Pancreas (tissue), 10 donors: ENCODE measurements at regions of chr3 and their contacts with region 1.

Region 1: GRCh38 chr3:73100741-73101559 is 39.5 kb downstream of the EBLN2 start:
- DNase-seq: peak; percentile 62 to 86 (median 76)
- ATAC-seq: peak; percentile 82 to 99 (median 96)
- H3K4me3 ChIP-seq: no peak overlapping the region
- H3K27ac ChIP-seq: no peak overlapping the region
- H3K4me1 ChIP-seq: peaks cover 0 to 4% (median 0%) of the 10 kb centered on the region in 3 donors
- H3K27me3 ChIP-seq: no peaks in the 10 kb centered on the region
- CTCF ChIP-seq: peak; percentile 76 to 93 (median 87)

Region 2: DNA sequence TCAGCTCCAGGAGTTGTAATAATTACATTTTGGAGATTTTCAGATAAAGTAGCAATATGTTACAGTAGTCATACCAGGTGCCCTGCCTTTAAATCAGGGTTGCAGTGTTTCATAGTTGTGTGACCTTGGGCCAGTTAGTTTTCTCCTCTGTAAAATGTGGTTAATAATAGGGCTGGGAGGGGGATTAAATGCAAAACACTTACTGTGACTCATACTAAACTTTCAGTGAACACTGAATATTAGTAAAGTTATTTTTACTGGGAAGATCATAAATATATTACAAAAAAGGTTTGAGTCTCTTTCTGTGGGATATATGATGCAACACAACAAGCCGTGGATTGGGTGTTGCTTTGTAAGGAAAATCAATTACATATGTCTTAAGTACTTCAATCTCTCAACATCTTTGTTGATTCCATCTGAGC is 40.6 kb before region 1 on chr3:
- intact Hi-C with region 1: no loop called
- DNase-seq: no peak
- ATAC-seq: no peak
- H3K4me3 ChIP-seq: no peak overlapping the region
- H3K27ac ChIP-seq: no peak overlapping the region
- H3K4me1 ChIP-seq: no peaks in the 10 kb centered on the region
- H3K27me3 ChIP-seq: no peaks in the 10 kb centered on the region
- CTCF ChIP-seq: no peak

Region 3: GRCh38 chr3:73437828-73438227 is 336.9 kb after region 1 on chr3:
- intact Hi-C with region 1: loop called in 2 of 3 experiments (anchors 5 kb)
- DNase-seq: no peak
- ATAC-seq: no peak
- H3K4me3 ChIP-seq: no peak overlapping the region
- H3K27ac ChIP-seq: no peak overlapping the region
- H3K4me1 ChIP-seq: no peaks in the 10 kb centered on the region
- H3K27me3 ChIP-seq: no peaks in the 10 kb centered on the region
- CTCF ChIP-seq: no peak

Region 4: GRCh38 chr3:73502609-73503583 is 401.9 kb after region 1 on chr3:
- intact Hi-C with region 1: loop called in 2 of 3 experiments (anchors 5 to 10 kb)
- DNase-seq: peak in 5 of 6 donors; percentile 42 to 76 (median 67)
- ATAC-seq: peak; percentile 79 to 91 (median 88)
- H3K4me3 ChIP-seq: no peak overlapping the region
- H3K27ac ChIP-seq: no peak overlapping the region
- H3K4me1 ChIP-seq: peaks cover 0 to 7% (median 3%) of the 10 kb centered on the region in 3 donors
- H3K27me3 ChIP-seq: no peaks in the 10 kb centered on the region
- CTCF ChIP-seq: peak; percentile 49 to 77 (median 67)

Region 5: GRCh38 chr3:73848173-73848906 is 747.4 kb after region 1 on chr3:
- intact Hi-C with region 1: loop called in 1 of 3 experiments (anchors 5 kb)
- DNase-seq: no peak
- ATAC-seq: peak in 3 of 4 donors; percentile 51 to 75 (median 69)
- H3K4me3 ChIP-seq: no peak overlapping the region
- H3K27ac ChIP-seq: no peak overlapping the region
- H3K4me1 ChIP-seq: no peaks in the 10 kb centered on the region
- H3K27me3 ChIP-seq: no peaks in the 10 kb centered on the region
- CTCF ChIP-seq: peak; percentile 20 to 40 (median 36)